Activated T-helper 2 cell treated with anti-CD3 and anti-CD28 coated beads, Interferon-gamma antibody, Interleukin-2, Interleukin-4, amounts not matched to agents 10 μg/mL and 5 μg/mL and 100 μg/mL, durations not matched to agents 14 hours and 24 hours and 36 hours (primary cell): ENCODE measurements at regions of chr3 and their contacts with region 1.

Region 1: GRCh38 chr3:50611464-50612233 is at the start of gene CISH:
- DNase-seq: peak; percentile 99
- H3K4me3 Mint-ChIP-seq: peak within 1 kb of the TSS; percentile 95
- H3K27ac Mint-ChIP-seq: peak within 1 kb of the TSS; percentile 100
- H3K4me1 Mint-ChIP-seq: peaks cover 29% of the 10 kb centered on the region
- H3K27me3 Mint-ChIP-seq: no peaks in the 10 kb centered on the region
- total RNA-seq, gene CISH: 351 and 355 TPM in 2 replicates

Region 2: DNA sequence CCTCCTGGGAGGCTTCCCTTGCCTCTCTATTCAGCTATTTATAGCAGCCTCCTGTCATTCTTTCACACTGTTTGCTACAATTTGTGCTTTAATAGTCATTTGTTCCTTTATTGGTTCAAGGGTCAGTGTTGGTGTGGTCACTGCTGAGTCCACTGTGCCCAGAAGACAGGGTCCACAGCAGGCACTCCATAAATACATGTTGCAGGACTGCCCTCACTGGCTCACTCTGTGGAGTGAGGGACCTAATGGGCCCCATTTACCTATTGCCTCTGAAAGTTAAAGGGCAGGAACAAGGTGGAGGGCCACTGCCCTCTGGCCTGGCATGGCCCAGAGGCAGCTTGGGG is 724.8 kb before region 1 on chr3:
- intact Hi-C with region 1: no loop called
- DNase-seq: no peak
- H3K4me3 Mint-ChIP-seq: no peak overlapping the region
- H3K27ac Mint-ChIP-seq: no peak overlapping the region
- H3K4me1 Mint-ChIP-seq: no peaks in the 10 kb centered on the region
- H3K27me3 Mint-ChIP-seq: no peaks in the 10 kb centered on the region

Region 3: DNA sequence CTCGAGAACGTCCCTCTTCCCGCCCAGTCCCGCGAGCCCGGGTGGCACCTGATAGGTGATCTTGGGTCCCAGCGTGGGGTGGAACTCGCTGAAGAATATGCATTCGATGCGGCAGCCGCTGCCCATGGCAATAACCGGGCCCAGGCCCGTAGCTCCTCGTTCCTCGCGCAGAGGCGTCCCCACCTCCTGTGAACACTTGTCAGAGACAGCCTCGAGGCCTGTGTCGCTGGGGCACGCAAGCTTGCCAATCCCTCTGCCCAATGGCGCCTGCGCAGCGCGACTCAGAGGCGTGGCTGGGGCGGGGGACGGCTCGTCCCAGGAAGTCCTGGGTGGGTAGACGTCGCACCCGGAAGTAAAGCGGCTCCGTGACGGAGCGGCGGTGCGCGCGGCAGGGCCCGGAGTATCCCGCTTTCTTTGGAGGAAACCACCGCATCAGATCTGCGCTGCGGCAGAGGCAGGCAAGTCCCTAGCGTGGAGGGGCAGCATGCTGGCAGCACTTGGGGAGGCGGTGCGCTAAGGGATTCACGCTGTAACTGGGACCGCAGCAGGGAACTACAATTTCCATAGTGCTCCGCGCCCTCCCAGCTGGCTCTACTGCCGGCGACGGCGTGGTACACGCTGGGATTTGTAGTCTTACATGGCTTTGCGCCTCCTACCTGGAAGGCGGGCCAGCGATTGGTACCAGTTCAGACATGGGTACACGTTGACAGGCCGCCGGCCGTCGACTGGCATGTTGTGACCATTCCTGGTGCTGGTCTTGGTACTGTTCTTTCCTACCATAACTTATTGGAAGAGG is 260.9 kb before region 1 on chr3 and contains the starts of genes CYB561D2 and NPRL2:
- intact Hi-C with region 1: loop called (anchors 5 kb)
- DNase-seq: peak; percentile 99
- H3K4me3 Mint-ChIP-seq: peak within 1 kb of the TSS; percentile 91
- H3K27ac Mint-ChIP-seq: peak within 1 kb of the TSS; percentile 96
- H3K4me1 Mint-ChIP-seq: peaks cover 36% of the 10 kb centered on the region
- H3K27me3 Mint-ChIP-seq: no peaks in the 10 kb centered on the region
- total RNA-seq, gene CYB561D2: 22.9 and 24.6 TPM in 2 replicates
- total RNA-seq, gene NPRL2: 34.5 and 42.7 TPM in 2 replicates

Region 4: GRCh38 chr3:50519471-50520089 is 92.1 kb before region 1 on chr3:
- intact Hi-C with region 1: loop called (anchors 1 kb)
- DNase-seq: peak; percentile 67
- H3K4me3 Mint-ChIP-seq: no peak overlapping the region
- H3K27ac Mint-ChIP-seq: no peak overlapping the region
- H3K4me1 Mint-ChIP-seq: peaks cover 3% of the 10 kb centered on the region
- H3K27me3 Mint-ChIP-seq: peaks cover 16% of the 10 kb centered on the region

Region 5: DNA sequence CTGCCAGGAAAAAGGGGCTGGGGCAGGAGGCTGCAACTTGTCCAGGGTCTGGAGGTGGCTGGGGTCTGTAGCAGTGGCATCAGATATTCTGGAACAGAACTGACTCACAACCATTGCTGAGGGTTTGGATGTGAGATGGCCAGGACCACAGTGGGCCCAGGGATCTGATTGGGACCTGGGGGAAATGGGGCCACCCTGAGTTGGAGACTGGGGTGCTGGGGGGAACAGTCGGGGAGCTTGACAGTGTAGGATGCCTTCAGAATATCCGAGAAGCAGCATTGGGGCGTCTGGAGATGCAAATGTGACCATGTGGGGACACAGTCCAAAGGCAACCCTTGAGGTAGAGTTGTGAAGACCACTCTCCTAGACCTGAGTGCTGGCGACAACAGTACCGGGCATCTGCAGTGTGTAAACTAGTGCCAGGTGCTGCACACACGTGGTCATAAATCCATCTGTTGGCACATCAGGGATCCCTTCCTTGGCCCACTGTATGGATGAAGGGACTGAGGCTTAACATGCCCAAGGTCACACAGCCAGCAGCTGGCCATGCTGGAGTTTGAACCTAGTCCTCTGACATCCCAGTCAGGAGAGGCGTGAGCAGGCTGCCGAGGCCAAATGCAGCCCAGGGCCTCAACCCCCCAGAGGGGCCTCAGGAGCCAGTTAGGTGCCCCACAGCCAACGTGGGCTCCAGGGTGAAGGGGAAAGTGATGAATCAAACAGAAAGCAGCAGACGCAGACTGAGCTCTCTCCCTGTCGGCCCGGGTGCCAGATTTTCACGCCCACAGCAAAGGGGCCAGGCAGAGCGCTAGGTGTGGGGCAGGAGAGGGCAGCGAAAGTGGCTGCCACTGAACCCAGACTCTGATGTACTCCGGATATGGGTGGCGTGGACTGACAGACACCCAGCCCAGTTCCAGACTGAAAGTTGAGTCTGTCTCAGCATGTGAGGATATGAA is 23.6 kb before region 1 on chr3:
- intact Hi-C with region 1: loop called (anchors 1 kb)
- DNase-seq: peak; percentile 64
- H3K4me3 Mint-ChIP-seq: peak overlapping the region; percentile 58
- H3K27ac Mint-ChIP-seq: peak overlapping the region; percentile 98
- H3K4me1 Mint-ChIP-seq: peaks cover 78% of the 10 kb centered on the region
- H3K27me3 Mint-ChIP-seq: no peaks in the 10 kb centered on the region

Region 6: DNA sequence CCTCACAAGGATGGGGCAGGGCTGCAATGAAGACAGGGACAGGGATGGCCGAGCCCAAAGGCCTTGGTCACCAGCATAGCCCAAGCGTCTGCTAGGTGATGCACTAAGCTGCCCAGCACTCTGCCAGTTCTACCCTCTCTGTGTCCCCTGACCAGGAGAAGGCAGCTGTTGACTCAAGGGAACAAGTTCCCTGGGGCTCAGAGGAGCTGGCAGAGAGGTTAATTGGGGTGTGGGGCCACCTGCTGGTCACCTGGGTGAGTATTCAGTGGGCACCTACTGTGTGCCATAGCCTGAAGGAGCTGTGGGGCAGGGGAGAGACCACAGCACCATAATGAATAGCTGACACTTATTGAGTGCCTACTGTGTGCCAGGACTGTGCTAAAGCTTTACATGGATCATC is 41.1 kb after region 1 on chr3:
- intact Hi-C with region 1: loop called (anchors 1 kb)
- DNase-seq: peak; percentile 29
- H3K4me3 Mint-ChIP-seq: no peak overlapping the region
- H3K27ac Mint-ChIP-seq: peak overlapping the region; percentile 10
- H3K4me1 Mint-ChIP-seq: peaks cover 17% of the 10 kb centered on the region
- H3K27me3 Mint-ChIP-seq: no peaks in the 10 kb centered on the region

Region 7: DNA sequence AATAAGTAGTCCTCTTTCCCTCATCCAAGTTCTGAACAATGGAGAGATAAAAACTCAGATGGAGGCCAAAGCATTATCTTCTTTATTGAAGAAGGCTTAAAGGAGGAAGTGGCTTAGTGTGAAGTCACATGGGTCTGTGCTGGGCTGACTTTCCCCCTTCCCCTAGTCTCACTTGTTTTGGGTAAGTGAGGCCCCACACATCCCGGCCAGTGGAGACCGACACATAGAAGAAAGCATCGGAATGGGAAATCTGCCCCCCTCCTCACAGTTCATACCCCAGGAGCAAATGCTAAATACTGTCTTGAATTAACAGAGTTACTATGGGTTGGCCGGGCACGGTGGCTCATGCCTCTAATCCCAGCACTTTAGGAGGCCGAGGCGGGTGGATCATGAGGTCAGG is 54.0 kb after region 1 on chr3:
- intact Hi-C with region 1: no loop called
- DNase-seq: no peak
- H3K4me3 Mint-ChIP-seq: no peak overlapping the region
- H3K27ac Mint-ChIP-seq: peak overlapping the region; percentile 38
- H3K4me1 Mint-ChIP-seq: peaks cover 19% of the 10 kb centered on the region
- H3K27me3 Mint-ChIP-seq: peaks cover 4% of the 10 kb centered on the region

Region 8: DNA sequence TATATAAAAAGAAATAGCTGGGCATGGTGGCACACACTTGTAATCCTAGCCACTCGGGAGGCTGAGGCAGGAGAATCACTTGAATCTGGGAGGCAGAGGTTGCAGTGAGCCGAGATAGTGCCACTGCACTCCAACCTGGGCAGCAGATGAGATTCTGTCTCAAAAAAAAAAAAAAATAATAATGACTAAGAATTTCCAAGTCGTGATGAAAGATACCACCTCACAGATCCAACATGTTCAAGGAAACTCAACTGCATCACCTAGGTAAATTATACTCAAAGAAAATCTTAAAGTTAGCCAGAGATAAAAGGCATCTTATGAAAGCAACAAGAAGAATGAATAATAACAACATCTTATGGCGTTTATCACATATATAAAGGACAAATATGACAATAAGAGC is 113.2 kb after region 1 on chr3:
- intact Hi-C with region 1: no loop called
- DNase-seq: no peak
- H3K4me3 Mint-ChIP-seq: no peak overlapping the region
- H3K27ac Mint-ChIP-seq: no peak overlapping the region
- H3K4me1 Mint-ChIP-seq: no peaks in the 10 kb centered on the region
- H3K27me3 Mint-ChIP-seq: no peaks in the 10 kb centered on the region

Region 9: GRCh38 chr3:50913260-50913659 is 301.6 kb after region 1 on chr3:
- intact Hi-C with region 1: no loop called
- DNase-seq: no peak
- H3K4me3 Mint-ChIP-seq: no peak overlapping the region
- H3K27ac Mint-ChIP-seq: no peak overlapping the region
- H3K4me1 Mint-ChIP-seq: no peaks in the 10 kb centered on the region
- H3K27me3 Mint-ChIP-seq: peaks cover 1% of the 10 kb centered on the region

Region 10: DNA sequence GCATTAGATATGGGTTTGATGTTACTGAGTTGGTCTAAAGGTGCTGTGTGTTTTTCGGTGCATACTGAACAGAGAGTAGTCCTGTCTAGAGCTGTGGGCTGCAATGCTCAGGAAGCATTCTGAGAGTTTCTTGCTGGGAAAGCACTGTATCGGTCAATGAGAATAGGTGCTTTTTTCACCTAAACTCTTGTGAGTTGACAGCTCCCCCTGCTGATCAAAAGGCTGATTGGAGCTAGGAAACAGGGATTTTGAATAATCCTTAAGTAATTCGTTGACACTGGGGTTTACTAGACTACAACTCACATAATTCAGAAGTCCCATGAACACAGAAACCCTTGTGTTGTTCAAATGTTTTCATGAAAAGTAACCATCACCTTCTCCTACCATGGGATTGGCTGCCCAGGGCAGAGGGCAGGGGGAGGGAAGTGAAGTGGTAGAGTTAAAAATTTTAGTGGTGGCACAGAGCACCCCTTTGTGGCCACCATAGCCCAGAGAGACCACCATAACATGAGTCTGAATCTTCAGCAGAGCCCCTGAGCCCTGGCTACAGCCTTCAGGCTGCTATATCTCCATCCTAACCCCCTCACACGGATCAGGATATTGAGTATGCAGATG is 760.4 kb after region 1 on chr3:
- intact Hi-C with region 1: loop called (anchors 5 kb)
- DNase-seq: no peak
- H3K4me3 Mint-ChIP-seq: no peak overlapping the region
- H3K27ac Mint-ChIP-seq: no peak overlapping the region
- H3K4me1 Mint-ChIP-seq: no peaks in the 10 kb centered on the region
- H3K27me3 Mint-ChIP-seq: peaks cover 5% of the 10 kb centered on the region

Region 11: DNA sequence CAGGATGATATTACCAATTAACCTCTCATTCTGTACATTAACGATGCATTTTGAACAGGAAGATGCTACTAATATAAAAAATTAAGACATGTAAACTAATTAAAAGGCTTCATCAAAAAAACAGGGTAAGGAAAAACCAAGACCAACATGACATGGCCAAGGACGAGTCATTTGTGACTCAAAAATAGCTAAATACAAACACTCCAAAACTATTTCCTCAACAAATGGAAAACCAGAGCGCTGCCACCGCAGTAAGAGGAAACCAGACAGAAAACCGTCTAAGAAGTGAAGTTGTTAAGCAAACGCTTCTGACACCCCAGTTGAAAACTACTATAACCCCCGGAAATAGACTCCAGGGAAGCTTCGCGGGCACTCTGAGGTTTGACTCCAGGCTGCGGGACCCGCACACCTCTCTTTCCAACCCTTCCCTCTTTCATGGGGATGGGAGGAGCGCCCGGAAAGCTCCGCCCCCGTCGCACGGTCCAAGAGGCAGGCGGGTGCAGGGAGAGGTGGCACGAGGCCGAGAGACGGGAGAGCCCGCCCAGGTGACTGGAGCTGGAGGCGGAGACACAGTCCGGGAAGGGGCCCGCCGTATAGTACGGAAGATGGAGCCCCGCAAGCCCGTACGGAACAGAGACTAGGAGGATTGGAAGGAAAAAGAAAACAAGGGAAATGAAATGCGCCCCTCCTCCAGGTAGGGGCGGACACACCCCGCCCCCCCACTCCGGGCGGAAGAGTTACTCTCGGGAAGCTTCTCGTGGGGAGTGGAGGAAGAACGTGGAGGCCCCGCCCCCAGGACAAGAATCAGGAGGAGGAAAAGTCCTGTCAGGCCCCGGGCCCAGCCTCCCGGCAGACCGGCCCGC is 887.5 kb after region 1 on chr3:
- intact Hi-C with region 1: loop called (anchors 5 kb)
- DNase-seq: peak; percentile 85
- H3K4me3 Mint-ChIP-seq: peak overlapping the region; percentile 98
- H3K27ac Mint-ChIP-seq: peak overlapping the region; percentile 97
- H3K4me1 Mint-ChIP-seq: peaks cover 11% of the 10 kb centered on the region
- H3K27me3 Mint-ChIP-seq: no peaks in the 10 kb centered on the region